ENCODE measurements at regions of chr22 and their contacts with region 1.

Region 1: GRCh38 chr22:41848468-41848867 is 15.6 kb downstream of the SREBF2 start:
- DNase-seq: peak; percentile 17 to 62 (median 52)
- H3K4me3 ChIP-seq: no peak overlapping the region
- H3K27ac ChIP-seq: no peak overlapping the region
- H3K4me1 ChIP-seq: peaks cover 8 to 46% (median 25%) of the 10 kb centered on the region in 4 experiments
- H3K27me3 ChIP-seq: no peaks in the 10 kb centered on the region

Region 2: GRCh38 chr22:41732096-41732772 is 116.2 kb before region 1 on chr22:
- CTCF ChIA-PET with region 1: no interaction called
- POLR2A ChIA-PET with region 1: no interaction called
- DNase-seq: peak in 2 of 3 donors; percentile 17 to 27
- H3K4me3 ChIP-seq: no peak overlapping the region
- H3K27ac ChIP-seq: no peak overlapping the region
- H3K4me1 ChIP-seq: no peaks in the 10 kb centered on the region
- H3K27me3 ChIP-seq: no peaks in the 10 kb centered on the region

Region 3: GRCh38 chr22:41822317-41823060 is 26.0 kb before region 1 on chr22:
- CTCF ChIA-PET with region 1: interaction called, 19 read pairs
- POLR2A ChIA-PET with region 1: interaction called, 3 read pairs
- DNase-seq: peak; percentile 75 to 86 (median 85)
- H3K4me3 ChIP-seq: no peak overlapping the region
- H3K27ac ChIP-seq: no peak overlapping the region
- H3K4me1 ChIP-seq: peaks cover 0 to 3% (median 0%) of the 10 kb centered on the region in 4 experiments
- H3K27me3 ChIP-seq: no peaks in the 10 kb centered on the region

Region 4: GRCh38 chr22:41832553-41833368 is 15.7 kb before region 1 on chr22 and contains the start of gene SREBF2:
- CTCF ChIA-PET with region 1: interaction called, 19 read pairs
- POLR2A ChIA-PET with region 1: interaction called, 19 read pairs
- DNase-seq: peak; percentile 99 to 100 (median 100)
- H3K4me3 ChIP-seq: peak within 1 kb of the TSS; percentile 72 to 91 (median 80)
- H3K27ac ChIP-seq: peak within 1 kb of the TSS; percentile 94 to 98
- H3K4me1 ChIP-seq: peaks cover 9 to 42% (median 29%) of the 10 kb centered on the region in 4 experiments
- H3K27me3 ChIP-seq: no peaks in the 10 kb centered on the region